CD4-positive, alpha-beta T cell (primary cell): ENCODE measurements at regions of chr6 and their contacts with region 1.

Region 1: DNA sequence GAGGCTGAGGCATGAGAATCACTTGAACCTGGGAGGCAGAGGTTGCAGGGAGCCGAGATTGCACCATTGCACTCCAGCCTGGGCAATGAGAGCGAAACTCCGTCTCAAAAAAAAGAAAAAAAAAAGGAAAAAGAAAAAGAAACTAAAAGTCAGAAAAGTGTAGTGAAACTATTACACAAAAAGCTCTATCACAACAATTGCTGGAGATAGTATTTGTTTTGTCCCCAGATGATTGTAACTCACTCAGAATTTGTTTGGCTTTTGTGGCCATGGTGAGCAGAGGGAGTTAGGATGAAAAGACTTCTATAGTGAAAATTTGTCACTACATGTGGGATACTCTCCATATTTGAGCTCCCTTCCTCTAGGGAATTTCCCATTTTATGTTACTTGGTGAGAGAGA is 5.2 kb upstream of the GOPC start:
- DNase-seq: no peak
- ATAC-seq: no peak
- H3K4me3 ChIP-seq: no peak overlapping the region
- H3K4me3 Mint-ChIP-seq: no peak overlapping the region
- H3K27ac ChIP-seq: no peak overlapping the region
- H3K27ac Mint-ChIP-seq: no peak overlapping the region
- H3K4me1 ChIP-seq: peaks cover 5% of the 10 kb centered on the region
- H3K4me1 Mint-ChIP-seq: peaks cover 13% of the 10 kb centered on the region
- H3K27me3 ChIP-seq: peaks cover 4 to 20% of the 10 kb centered on the region in 2 experiments
- H3K27me3 Mint-ChIP-seq: peaks cover 22% of the 10 kb centered on the region
- CTCF ChIP-seq: no peak

Region 2: DNA sequence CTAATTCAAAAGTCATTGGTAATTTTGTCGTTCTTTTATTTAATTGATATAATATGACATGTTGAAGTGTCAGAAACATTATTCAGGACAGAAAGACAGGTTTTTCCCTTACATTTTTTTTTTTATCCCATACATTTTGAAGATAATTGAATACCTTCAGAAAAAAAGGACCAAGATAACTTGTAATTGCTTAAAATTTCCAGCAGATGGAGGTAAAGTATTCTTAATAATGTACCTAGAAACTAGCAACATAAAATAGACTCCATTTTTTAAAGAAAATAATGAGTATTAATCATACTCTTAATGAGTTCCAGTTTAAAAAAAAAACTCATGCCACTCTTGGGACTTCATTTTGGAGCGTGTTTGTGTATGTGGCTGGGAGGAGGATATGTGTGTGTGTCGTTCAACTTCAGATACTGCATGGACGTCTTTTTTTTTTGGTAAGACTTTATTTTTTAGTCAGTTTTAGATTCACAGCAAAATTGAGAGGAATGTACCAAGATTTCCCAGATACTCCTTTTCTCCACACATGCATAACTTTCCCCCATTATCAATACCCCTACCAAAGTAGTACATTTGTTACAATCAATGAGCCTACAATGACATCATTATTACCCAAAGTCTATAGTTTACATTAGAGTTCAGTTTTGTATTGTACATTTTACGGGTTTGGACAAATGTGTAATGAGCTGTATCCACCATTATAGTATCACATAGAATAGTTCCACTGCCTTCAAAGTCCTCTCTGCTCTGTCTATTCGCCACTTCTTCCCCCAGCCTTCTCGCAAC is 261.2 kb before region 1 on chr6:
- CTCF ChIA-PET with region 1: no interaction called
- POLR2A ChIA-PET with region 1: no interaction called
- intact Hi-C with region 1: loop called (anchors 2 kb)
- DNase-seq: peak in 3 of 14 experiments; percentile 16 to 30 (median 19)
- ATAC-seq: no peak
- H3K4me3 ChIP-seq: no peak overlapping the region
- H3K4me3 Mint-ChIP-seq: no peak overlapping the region
- H3K27ac ChIP-seq: no peak overlapping the region
- H3K27ac Mint-ChIP-seq: no peak overlapping the region
- H3K4me1 ChIP-seq: no peaks in the 10 kb centered on the region
- H3K4me1 Mint-ChIP-seq: no peaks in the 10 kb centered on the region
- H3K27me3 ChIP-seq: peaks cover 0 to 4% of the 10 kb centered on the region in 2 experiments
- H3K27me3 Mint-ChIP-seq: peaks cover 4% of the 10 kb centered on the region
- CTCF ChIP-seq: peak; percentile 65

Region 3: DNA sequence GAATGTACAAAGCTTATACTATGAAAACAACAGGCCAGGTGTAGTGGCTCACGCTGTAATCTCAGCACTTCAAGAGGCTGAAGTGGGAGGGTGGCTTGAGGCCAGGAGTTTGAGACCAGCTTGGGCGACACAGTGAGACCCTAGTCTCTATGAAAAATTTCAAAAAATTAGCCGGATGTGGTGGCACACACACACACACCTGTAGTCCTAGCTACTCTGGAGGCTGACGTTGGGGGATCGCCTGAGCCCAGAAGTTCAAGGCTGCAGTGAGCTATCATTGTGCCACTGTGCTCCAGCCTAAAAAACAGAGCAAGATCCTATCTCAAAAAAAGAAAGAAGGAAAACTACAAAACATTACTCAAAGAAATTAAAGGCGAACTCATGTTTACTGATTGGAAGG is 1279.1 kb after region 1 on chr6:
- CTCF ChIA-PET with region 1: no interaction called
- POLR2A ChIA-PET with region 1: no interaction called
- intact Hi-C with region 1: no loop called
- DNase-seq: peak in 1 of 14 experiments; percentile 36
- ATAC-seq: no peak
- H3K4me3 ChIP-seq: no peak overlapping the region
- H3K4me3 Mint-ChIP-seq: no peak overlapping the region
- H3K27ac ChIP-seq: no peak overlapping the region
- H3K27ac Mint-ChIP-seq: peak overlapping the region; percentile 56
- H3K4me1 ChIP-seq: peaks cover 32% of the 10 kb centered on the region
- H3K4me1 Mint-ChIP-seq: peaks cover 91% of the 10 kb centered on the region
- H3K27me3 ChIP-seq: no peaks in the 10 kb centered on the region
- H3K27me3 Mint-ChIP-seq: no peaks in the 10 kb centered on the region
- CTCF ChIP-seq: no peak